Sigmoid colon (tissue), 7 donors: ENCODE measurements at regions of chr16 and their contacts with region 1.

Region 1: DNA sequence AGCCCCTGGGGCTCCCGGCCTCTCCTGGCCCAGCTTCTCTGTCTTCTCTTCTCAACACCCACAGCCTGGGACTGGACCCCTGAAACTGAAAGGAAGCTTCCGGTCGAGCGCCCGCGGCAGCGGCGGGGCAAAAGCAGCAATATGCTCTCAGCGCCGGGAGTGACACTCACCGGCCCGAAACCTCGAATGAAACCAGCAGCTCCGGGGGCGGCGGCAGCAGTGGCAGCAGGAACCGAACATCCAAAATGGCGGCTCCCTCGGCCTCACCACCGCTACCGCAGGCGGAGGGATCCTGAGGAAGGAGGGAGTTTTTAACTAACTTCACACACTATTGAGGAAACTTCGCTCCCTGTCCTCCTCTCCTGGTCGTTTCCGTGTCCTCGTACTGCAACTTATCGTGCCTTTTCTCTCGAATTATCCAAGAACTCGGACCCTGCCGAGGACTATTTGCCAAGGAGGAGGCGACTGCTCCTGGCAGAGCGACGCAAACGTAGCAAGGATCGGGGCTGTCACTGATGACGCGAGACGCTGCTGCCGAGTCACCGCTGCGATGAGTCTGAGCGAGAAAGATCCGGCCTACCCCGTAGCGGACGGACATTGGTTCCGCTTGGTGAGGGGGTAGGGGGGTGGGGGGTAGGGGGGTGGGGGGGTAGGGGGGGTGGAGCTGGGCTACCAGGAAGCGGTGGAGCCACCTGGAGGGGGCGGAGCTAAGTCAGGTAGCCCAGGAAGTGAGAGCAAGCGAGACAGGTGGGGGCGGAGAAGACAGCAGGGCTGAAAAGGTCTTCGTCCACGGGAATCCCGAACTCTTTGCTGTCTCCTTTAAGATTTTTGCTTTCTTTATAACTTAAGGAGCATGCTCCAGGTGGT is at the start of gene AP1G1:
- DNase-seq: peak; percentile 98
- H3K4me3 ChIP-seq: peak within 1 kb of the TSS; percentile 77 to 98 (median 79)
- H3K27ac ChIP-seq: peak within 1 kb of the TSS; percentile 94 to 99 (median 97)
- H3K4me1 ChIP-seq: peaks cover 0 to 38% (median 31%) of the 10 kb centered on the region in 4 donors
- H3K27me3 ChIP-seq: no peaks in the 10 kb centered on the region
- CTCF ChIP-seq: no peak
- EP300 ChIP-seq: peak in 1 of 4 donors; percentile 65
- POLR2A ChIP-seq: peak; percentile 50 to 57
- total RNA-seq, gene AP1G1: 34.9 to 57.3 (median 51.1) TPM

Region 2: GRCh38 chr16:70759666-70760065 is 1049.2 kb before region 1 on chr16:
- intact Hi-C with region 1: no loop called
- DNase-seq: no peak
- H3K4me3 ChIP-seq: no peak overlapping the region
- H3K27ac ChIP-seq: peak overlapping the region in 1 of 4 donors; percentile 57
- H3K4me1 ChIP-seq: peaks cover 0 to 5% (median 0%) of the 10 kb centered on the region in 4 donors
- H3K27me3 ChIP-seq: no peaks in the 10 kb centered on the region
- CTCF ChIP-seq: no peak
- EP300 ChIP-seq: no peak
- POLR2A ChIP-seq: no peak

Region 3: GRCh38 chr16:71723537-71724319 is 85.1 kb before region 1 on chr16:
- intact Hi-C with region 1: loop called (anchors 5 kb)
- DNase-seq: peak; percentile 87
- H3K4me3 ChIP-seq: peak overlapping the region; percentile 58 to 96 (median 78)
- H3K27ac ChIP-seq: peak overlapping the region; percentile 81 to 99 (median 96)
- H3K4me1 ChIP-seq: peaks cover 0 to 34% (median 23%) of the 10 kb centered on the region in 4 donors
- H3K27me3 ChIP-seq: no peaks in the 10 kb centered on the region
- CTCF ChIP-seq: no peak
- EP300 ChIP-seq: no peak
- POLR2A ChIP-seq: no peak

Region 4: GRCh38 chr16:71845639-71846430 is 37.0 kb after region 1 on chr16 and contains the start of gene ATXN1L:
- intact Hi-C with region 1: loop called (anchors 2 kb)
- DNase-seq: peak; percentile 96
- H3K4me3 ChIP-seq: peak within 1 kb of the TSS; percentile 81 to 94 (median 92)
- H3K27ac ChIP-seq: peak within 1 kb of the TSS; percentile 83 to 91 (median 88)
- H3K4me1 ChIP-seq: peaks cover 0 to 22% (median 15%) of the 10 kb centered on the region in 4 donors
- H3K27me3 ChIP-seq: no peaks in the 10 kb centered on the region
- CTCF ChIP-seq: no peak
- EP300 ChIP-seq: peak in 1 of 4 donors; percentile 70
- POLR2A ChIP-seq: peak; percentile 73 to 80
- total RNA-seq, gene ATXN1L: 22.8 to 25.0 (median 24.4) TPM